IMR-90 (cell line): ENCODE measurements at regions of chr4 and their contacts with region 1.

Region 1: GRCh38 chr4:76341063-76341462 is 34.5 kb downstream of the STBD1 start:
- DNase-seq: peak; percentile 77
- ATAC-seq: peak; percentile 82
- H3K4me3 ChIP-seq: no peak overlapping the region
- H3K27ac ChIP-seq: no peak overlapping the region
- H3K4me1 ChIP-seq: no peaks in the 10 kb centered on the region
- H3K27me3 ChIP-seq: peaks cover 10% of the 10 kb centered on the region
- CTCF ChIP-seq: no peak
- POLR2A ChIP-seq: no peak
- RAD21 ChIP-seq: no peak

Region 2: DNA sequence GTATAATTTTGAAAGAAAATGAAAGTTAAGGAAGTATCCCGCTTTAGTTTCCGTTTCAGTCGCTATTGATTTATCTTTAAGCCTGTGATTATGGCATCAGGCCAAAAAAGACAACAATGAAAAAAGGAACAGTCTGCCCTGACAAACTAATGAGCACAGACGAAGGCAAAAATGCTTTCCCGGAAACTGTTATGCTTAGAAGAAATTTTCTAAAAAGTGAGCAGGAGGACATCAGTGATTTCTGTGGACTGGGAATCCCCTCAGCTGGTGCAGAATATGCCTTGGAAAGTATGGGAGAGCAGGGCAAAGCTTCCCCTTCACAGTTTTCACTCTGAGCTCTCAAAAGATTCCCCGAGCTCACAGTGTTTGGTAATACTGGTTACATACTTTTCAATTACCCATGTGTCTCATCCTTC is 312.7 kb before region 1 on chr4:
- CTCF ChIA-PET with region 1: interaction called, 12 read pairs
- POLR2A ChIA-PET with region 1: no interaction called
- dilution Hi-C with region 1: no loop called
- in situ Hi-C with region 1: no loop called
- intact Hi-C with region 1: no loop called
- DNase-seq: peak; percentile 17
- ATAC-seq: peak; percentile 70
- H3K4me3 ChIP-seq: peak overlapping the region; percentile 40
- H3K27ac ChIP-seq: no peak overlapping the region
- H3K4me1 ChIP-seq: 0 out of 2 replicates have a peak, but pooled peaks cover under 1% of the 10 kb centered on the region
- H3K27me3 ChIP-seq: peaks cover 3% of the 10 kb centered on the region; the same call in 1 of the 2 replicates
- CTCF ChIP-seq: no peak
- POLR2A ChIP-seq: no peak
- RAD21 ChIP-seq: no peak

Region 3: GRCh38 chr4:76219299-76220055 is 121.6 kb before region 1 on chr4:
- CTCF ChIA-PET with region 1: no interaction called
- POLR2A ChIA-PET with region 1: no interaction called
- dilution Hi-C with region 1: no loop called
- in situ Hi-C with region 1: no loop called
- intact Hi-C with region 1: no loop called
- DNase-seq: peak; percentile 62
- ATAC-seq: peak; percentile 79
- H3K4me3 ChIP-seq: no peak overlapping the region
- H3K27ac ChIP-seq: peak overlapping the region; percentile 60
- H3K4me1 ChIP-seq: peaks cover 5% of the 10 kb centered on the region; the same call in 1 of the 2 replicates
- H3K27me3 ChIP-seq: no peaks in the 10 kb centered on the region; the same call in 1 of the 2 replicates
- CTCF ChIP-seq: no peak
- POLR2A ChIP-seq: no peak
- RAD21 ChIP-seq: no peak